WTC11 (cell line): ENCODE measurements at regions of chr13 and their contacts with region 1.

Region 1: DNA sequence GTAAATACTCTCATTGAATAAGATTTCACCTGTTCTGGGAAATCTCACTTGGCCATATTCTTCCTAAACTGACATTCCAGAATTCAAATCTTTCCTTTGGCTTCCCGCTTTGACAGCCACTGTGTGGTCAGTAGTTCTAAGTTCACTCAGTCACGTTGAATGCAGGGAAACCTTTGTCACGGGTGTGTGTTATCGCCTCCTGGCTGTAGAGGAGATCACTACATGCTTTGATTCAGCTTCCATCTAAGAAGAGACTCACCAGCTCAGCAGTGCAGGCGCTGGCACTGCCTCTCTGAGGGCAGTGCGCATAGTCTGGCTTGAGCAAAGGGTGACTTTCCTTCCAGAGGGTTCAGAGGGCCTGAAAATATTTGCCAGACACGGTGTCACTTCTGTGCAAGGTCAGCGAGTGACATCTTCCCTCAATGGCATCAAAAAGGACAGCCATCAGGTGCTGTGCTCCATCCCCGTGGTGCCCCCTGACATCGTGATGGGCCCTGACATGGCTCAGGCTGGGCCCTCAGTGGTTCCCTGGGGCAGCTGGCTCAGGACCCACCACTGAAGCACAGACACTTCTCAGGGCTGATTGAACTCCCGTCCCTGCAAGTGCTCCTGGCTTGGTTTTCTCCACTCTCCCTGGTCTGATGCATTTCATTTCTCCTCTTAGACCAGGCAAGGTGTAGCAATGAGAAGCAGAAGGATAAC is 635.4 kb upstream of the ARGLU1 start:
- DNase-seq: peak; percentile 43
- ATAC-seq: peak; percentile 85
- H3K4me3 Mint-ChIP-seq: no peak overlapping the region
- H3K27ac Mint-ChIP-seq: no peak overlapping the region
- H3K4me1 Mint-ChIP-seq: peaks cover 21% of the 10 kb centered on the region
- H3K27me3 Mint-ChIP-seq: no peaks in the 10 kb centered on the region
- CTCF ChIP-seq: peak; percentile 51

Region 2: GRCh38 chr13:107157271-107157670 is 46.0 kb before region 1 on chr13:
- CTCF ChIA-PET with region 1: no interaction called
- POLR2A ChIA-PET with region 1: no interaction called
- DNase-seq: no peak
- ATAC-seq: no peak
- H3K4me3 Mint-ChIP-seq: no peak overlapping the region
- H3K27ac Mint-ChIP-seq: no peak overlapping the region
- H3K4me1 Mint-ChIP-seq: no peaks in the 10 kb centered on the region
- H3K27me3 Mint-ChIP-seq: no peaks in the 10 kb centered on the region
- CTCF ChIP-seq: no peak

Region 3: GRCh38 chr13:107192289-107192688 is 11.0 kb before region 1 on chr13:
- CTCF ChIA-PET with region 1: interaction called, 15 read pairs
- POLR2A ChIA-PET with region 1: no interaction called
- DNase-seq: no peak
- ATAC-seq: no peak; the same call in 1 of the 2 replicates
- H3K4me3 Mint-ChIP-seq: no peak overlapping the region
- H3K27ac Mint-ChIP-seq: no peak overlapping the region
- H3K4me1 Mint-ChIP-seq: peaks cover 22% of the 10 kb centered on the region
- H3K27me3 Mint-ChIP-seq: peaks cover 60% of the 10 kb centered on the region
- CTCF ChIP-seq: no peak

Region 4: GRCh38 chr13:107217251-107217650 is 14.0 kb after region 1 on chr13:
- CTCF ChIA-PET with region 1: interaction called, 11 read pairs
- POLR2A ChIA-PET with region 1: no interaction called
- DNase-seq: no peak
- ATAC-seq: no peak
- H3K4me3 Mint-ChIP-seq: no peak overlapping the region
- H3K27ac Mint-ChIP-seq: no peak overlapping the region
- H3K4me1 Mint-ChIP-seq: peaks cover 22% of the 10 kb centered on the region
- H3K27me3 Mint-ChIP-seq: no peaks in the 10 kb centered on the region
- CTCF ChIP-seq: no peak

Region 5: GRCh38 chr13:107222597-107222996 is 19.3 kb after region 1 on chr13:
- CTCF ChIA-PET with region 1: interaction called, 11 read pairs
- POLR2A ChIA-PET with region 1: no interaction called
- DNase-seq: no peak
- ATAC-seq: peak; percentile 65
- H3K4me3 Mint-ChIP-seq: no peak overlapping the region
- H3K27ac Mint-ChIP-seq: no peak overlapping the region
- H3K4me1 Mint-ChIP-seq: peaks cover 13% of the 10 kb centered on the region
- H3K27me3 Mint-ChIP-seq: no peaks in the 10 kb centered on the region
- CTCF ChIP-seq: no peak

Region 6: DNA sequence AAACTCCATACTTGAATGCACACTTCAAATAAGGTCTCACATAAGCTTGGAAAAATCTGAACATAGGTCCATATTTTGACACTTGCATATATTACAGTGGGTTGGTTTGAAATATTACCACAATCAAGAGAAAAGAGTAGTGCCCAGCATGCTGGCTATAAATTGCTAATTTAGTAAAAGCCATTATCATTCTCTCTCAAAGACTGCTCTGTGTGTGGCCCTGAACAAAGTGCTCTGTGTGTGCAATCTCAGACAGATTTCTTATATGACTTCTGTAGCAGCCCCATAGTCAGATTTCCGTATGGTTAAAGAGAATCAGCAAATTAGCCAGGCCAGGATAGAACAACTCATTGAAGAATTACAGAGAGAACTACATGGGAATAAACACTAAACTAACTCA is 933.9 kb after region 1 on chr13:
- CTCF ChIA-PET with region 1: no interaction called
- POLR2A ChIA-PET with region 1: no interaction called
- DNase-seq: no peak
- ATAC-seq: no peak
- H3K4me3 Mint-ChIP-seq: no peak overlapping the region
- H3K27ac Mint-ChIP-seq: no peak overlapping the region
- H3K4me1 Mint-ChIP-seq: no peaks in the 10 kb centered on the region
- H3K27me3 Mint-ChIP-seq: no peaks in the 10 kb centered on the region
- CTCF ChIP-seq: no peak